ENCODE measurements at regions of chr16 and their contacts with region 1.

Region 1: GRCh38 chr16:2500918-2501750 is 12.6 kb upstream of the ATP6V0C start:
- DNase-seq: peak; percentile 82 to 83
- ATAC-seq: peak; percentile 87 to 95
- H3K4me3 ChIP-seq: no peak overlapping the region
- H3K27ac ChIP-seq: peak overlapping the region; percentile 36 to 65; a peak in 3 of 6 replicates
- H3K4me1 ChIP-seq: peaks cover 28% of the 10 kb centered on the region
- CTCF ChIP-seq: peak; percentile 92
- EP300 ChIP-seq: no peak
- POLR2A ChIP-seq: no peak
- RAD21 ChIP-seq: peak; percentile 93 to 95

Region 2: GRCh38 chr16:2273484-2273883 is 227.7 kb before region 1 on chr16:
- CTCF ChIA-PET with region 1: interaction called, 20 read pairs
- POLR2A ChIA-PET with region 1: no interaction called
- DNase-seq: no peak
- ATAC-seq: no peak
- H3K4me3 ChIP-seq: no peak overlapping the region
- H3K27ac ChIP-seq: no peak overlapping the region
- H3K4me1 ChIP-seq: peaks cover 11% of the 10 kb centered on the region; the same call in 1 of the 3 replicates
- CTCF ChIP-seq: no peak
- EP300 ChIP-seq: no peak
- POLR2A ChIP-seq: no peak
- RAD21 ChIP-seq: no peak

Region 3: GRCh38 chr16:2467521-2468151 is 33.5 kb before region 1 on chr16:
- CTCF ChIA-PET with region 1: interaction called, 13 read pairs
- POLR2A ChIA-PET with region 1: interaction called, 4 read pairs
- DNase-seq: peak; percentile 60 to 87
- ATAC-seq: peak; percentile 67 to 69
- H3K4me3 ChIP-seq: peak overlapping the region; percentile 53
- H3K27ac ChIP-seq: peak overlapping the region; percentile 82 to 85
- H3K4me1 ChIP-seq: peaks cover 29% of the 10 kb centered on the region
- CTCF ChIP-seq: no peak
- EP300 ChIP-seq: no peak
- POLR2A ChIP-seq: peak; percentile 40
- RAD21 ChIP-seq: no peak

Region 4: GRCh38 chr16:2486645-2487516 is 14.3 kb before region 1 on chr16:
- CTCF ChIA-PET with region 1: interaction called, 98 read pairs
- POLR2A ChIA-PET with region 1: no interaction called
- DNase-seq: no peak
- ATAC-seq: no peak; a peak in 1 of 6 replicates
- H3K4me3 ChIP-seq: no peak overlapping the region
- H3K27ac ChIP-seq: no peak overlapping the region
- H3K4me1 ChIP-seq: no peaks in the 10 kb centered on the region
- CTCF ChIP-seq: no peak
- EP300 ChIP-seq: no peak
- POLR2A ChIP-seq: no peak
- RAD21 ChIP-seq: no peak

Region 5: DNA sequence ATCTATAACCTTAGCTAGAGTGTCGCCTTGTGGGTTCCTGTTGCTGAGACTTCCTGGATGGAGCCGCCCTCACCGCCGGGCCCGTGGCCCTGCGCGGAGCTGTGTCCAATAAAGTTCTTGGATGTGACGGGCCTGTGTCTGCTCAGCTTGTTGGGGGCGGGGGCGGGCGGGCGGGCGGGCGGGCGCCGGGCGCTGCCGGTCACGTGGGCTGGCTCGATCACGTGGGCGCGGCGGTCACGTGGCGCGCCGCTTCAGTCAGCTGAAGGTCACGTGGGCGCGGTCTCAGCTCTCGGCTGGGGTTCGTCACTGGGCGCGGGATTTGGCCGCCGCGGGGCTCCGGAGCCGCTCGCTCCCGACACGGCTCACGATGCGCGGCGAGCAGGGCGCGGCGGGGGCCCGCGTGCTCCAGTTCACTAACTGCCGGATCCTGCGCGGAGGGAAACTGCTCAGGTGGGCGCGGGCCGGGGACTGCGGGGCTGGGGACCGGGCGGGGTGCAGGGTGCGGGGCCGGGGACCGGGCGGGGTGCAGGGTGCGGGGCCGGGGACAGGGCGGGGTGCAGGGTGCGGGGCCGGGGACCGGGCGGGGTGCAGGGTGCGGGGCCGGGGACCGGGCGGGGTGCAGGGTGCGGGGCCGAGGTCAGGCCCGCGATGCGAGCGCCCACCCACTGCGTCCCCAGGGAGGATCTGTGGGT is 19.1 kb after region 1 on chr16 and contains the start of gene AMDHD2:
- CTCF ChIA-PET with region 1: interaction called, 91 read pairs
- POLR2A ChIA-PET with region 1: no interaction called
- DNase-seq: peak; percentile 91 to 93
- ATAC-seq: peak; percentile 57 to 65
- H3K4me3 ChIP-seq: peak within 1 kb of the TSS; percentile 58
- H3K27ac ChIP-seq: peak within 1 kb of the TSS; percentile 71 to 96
- H3K4me1 ChIP-seq: peaks cover 36% of the 10 kb centered on the region
- CTCF ChIP-seq: no peak
- EP300 ChIP-seq: no peak
- POLR2A ChIP-seq: no peak
- RAD21 ChIP-seq: no peak
- polyA plus RNA-seq, gene AMDHD2: 5.2 and 6.6 TPM in 2 replicates

Region 6: GRCh38 chr16:2752035-2752849 is 251.1 kb after region 1 on chr16 and contains the start of gene SRRM2:
- CTCF ChIA-PET with region 1: no interaction called
- POLR2A ChIA-PET with region 1: no interaction called
- DNase-seq: peak; percentile 96 to 98
- ATAC-seq: peak; percentile 92
- H3K4me3 ChIP-seq: peak within 1 kb of the TSS; percentile 75
- H3K27ac ChIP-seq: peak within 1 kb of the TSS; percentile 98 to 100
- H3K4me1 ChIP-seq: peaks cover 33% of the 10 kb centered on the region
- CTCF ChIP-seq: no peak
- EP300 ChIP-seq: no peak
- POLR2A ChIP-seq: peak; percentile 70
- RAD21 ChIP-seq: no peak
- polyA plus RNA-seq, gene SRRM2: 167 and 231 TPM in 2 replicates

Measured in A549 (cell line).